Heart left ventricle (tissue), 16 donors: ENCODE measurements at regions of chr4 and their contacts with region 1.

Region 1: DNA sequence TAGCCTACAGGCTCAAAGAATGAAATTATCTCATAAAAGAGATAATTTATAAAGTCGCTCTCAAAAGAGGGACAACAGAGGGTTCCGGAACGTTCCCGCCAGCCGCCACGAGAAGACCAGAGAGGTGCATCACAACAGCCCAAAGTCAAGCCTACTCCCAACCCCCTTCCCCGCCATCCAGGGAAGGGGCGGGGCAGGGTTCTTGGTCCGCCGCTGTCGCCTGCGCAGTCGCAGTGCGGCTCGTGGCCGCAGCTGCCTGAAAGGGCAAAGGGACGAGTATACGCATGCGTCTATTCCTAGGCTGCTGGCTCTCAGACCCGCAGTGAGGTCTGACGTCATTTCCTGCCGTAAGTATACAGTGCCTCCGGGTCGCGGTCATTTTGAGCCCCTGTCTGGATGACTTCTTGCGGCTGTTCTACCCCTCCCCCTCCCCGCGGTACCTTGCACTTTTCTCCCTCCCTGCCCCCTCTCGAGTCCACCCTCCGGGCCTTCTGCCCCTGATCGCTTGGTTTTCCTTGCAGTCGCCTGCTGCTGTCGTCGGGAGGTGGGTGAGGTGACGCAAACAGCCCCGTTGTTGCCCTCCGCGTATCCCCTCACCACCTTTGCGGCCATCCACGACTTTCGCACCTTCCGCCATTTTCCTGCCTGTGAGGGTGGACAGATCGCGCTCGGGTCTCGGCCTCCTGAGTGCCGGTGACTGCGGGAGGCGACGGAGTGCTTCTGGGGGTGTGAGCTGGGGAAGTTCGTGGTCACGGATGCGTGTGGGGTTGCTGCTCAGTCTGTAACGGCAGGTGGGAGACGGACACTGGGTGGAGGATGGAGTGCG is at the start of gene OCIAD1:
- DNase-seq: peak; percentile 96 to 99 (median 98)
- ATAC-seq: peak; percentile 100
- H3K4me3 ChIP-seq: peak within 1 kb of the TSS; percentile 68 to 96 (median 80)
- H3K27ac ChIP-seq: peak within 1 kb of the TSS; percentile 88 to 97 (median 95)
- H3K4me1 ChIP-seq: peaks cover 0 to 26% (median 16%) of the 10 kb centered on the region in 12 donors
- H3K27me3 ChIP-seq: no peaks in the 10 kb centered on the region
- CTCF ChIP-seq: no peak
- POLR2A ChIP-seq: peak in 1 of 2 donors; percentile 65
- total RNA-seq, gene OCIAD1: 102 to 175 (median 137) TPM

Region 2: DNA sequence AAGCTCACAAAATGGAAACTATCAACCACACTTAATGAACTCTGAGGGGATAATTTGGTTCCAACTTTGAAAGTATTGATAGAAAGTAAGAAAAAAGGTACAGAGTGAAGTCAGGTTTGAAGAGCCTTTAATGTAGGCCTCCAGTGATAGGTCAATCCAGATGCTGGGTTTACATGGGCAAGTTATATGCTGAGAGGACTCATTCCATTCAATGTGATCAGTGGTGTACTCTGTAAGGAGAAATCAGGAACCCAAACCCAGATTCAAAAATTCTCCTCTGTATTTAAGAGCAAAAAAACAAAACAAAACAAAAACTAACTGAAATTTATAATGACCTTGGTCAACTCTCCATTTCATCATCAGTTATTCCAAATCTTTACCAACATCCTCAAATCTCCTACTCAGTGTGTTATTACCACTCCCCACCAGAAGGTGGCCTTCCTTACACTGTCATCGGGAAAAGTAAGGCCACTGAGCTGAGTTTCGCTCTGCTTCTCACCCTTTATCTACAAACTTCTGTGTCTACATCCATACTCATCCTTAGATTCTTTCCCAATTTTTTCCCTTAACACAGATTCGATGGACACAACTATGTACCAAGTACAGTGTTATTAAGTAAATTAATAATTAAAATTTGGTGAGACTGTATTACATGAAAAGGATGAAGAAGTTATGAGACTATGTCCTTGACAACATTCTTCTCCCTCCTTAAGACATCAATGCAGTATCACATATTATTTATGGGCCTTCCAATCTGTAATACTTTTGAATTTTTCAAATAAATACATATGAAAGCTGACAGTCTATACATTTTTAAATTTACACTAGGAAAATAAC is 252.6 kb before region 1 on chr4:
- intact Hi-C with region 1: loop called in 3 of 10 experiments (anchors 10 kb)
- DNase-seq: peak in 4 of 5 donors; percentile 33 to 60 (median 50)
- ATAC-seq: peak; percentile 61 to 93 (median 88)
- H3K4me3 ChIP-seq: no peak overlapping the region
- H3K27ac ChIP-seq: peak overlapping the region in 1 of 12 donors; percentile 16
- H3K4me1 ChIP-seq: no peaks in the 10 kb centered on the region
- H3K27me3 ChIP-seq: no peaks in the 10 kb centered on the region
- CTCF ChIP-seq: peak; percentile 80 to 94 (median 90)
- POLR2A ChIP-seq: no peak

Region 3: DNA sequence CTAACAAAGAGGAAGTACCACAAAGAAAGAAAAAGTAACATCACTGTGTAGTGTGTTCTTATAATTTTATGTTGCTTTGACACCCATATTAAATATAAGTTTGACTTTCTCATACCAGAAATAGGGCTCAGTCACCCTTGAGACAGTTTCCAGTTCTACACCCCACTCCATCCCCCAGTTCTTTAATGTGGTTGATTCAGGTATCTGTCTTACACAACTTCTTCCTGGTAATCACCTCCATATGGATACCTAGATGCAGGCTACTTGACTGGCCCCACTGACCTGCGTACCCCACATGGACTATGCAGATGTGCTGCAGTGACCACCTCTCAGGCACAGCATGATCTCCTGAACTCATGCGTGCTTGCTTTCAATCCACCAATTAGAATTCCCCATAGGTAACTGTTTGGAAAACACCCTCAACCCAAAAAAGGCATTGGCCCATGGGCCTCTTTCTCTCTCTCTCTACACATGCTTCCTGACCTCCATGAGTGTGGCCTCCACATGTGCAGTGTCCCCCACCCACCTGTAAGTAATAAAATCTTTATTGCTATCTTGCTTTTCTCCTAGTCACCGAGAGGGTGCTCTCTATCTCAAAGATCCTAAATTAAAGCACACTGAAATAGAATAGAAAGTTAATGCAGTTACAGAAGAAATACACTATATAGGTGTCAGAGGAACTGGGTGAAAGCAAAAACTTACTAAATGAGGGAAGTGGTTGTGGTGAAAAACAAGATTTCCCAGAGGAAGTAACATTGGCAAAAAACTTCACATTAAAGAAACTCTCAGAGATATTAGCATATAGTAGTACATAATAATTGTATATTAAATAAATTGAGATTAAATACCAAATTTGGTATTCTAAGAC is 242.5 kb before region 1 on chr4:
- intact Hi-C with region 1: loop called in 2 of 10 experiments (anchors 5 to 10 kb)
- DNase-seq: no peak
- ATAC-seq: no peak
- H3K4me3 ChIP-seq: no peak overlapping the region
- H3K27ac ChIP-seq: no peak overlapping the region
- H3K4me1 ChIP-seq: peaks cover 0 to 23% (median 7%) of the 10 kb centered on the region in 12 donors
- H3K27me3 ChIP-seq: no peaks in the 10 kb centered on the region
- CTCF ChIP-seq: no peak
- POLR2A ChIP-seq: no peak

Region 4: GRCh38 chr4:48602222-48602621 is 228.7 kb before region 1 on chr4:
- intact Hi-C with region 1: loop called in 2 of 10 experiments (anchors 5 kb)
- DNase-seq: no peak
- ATAC-seq: no peak
- H3K4me3 ChIP-seq: no peak overlapping the region
- H3K27ac ChIP-seq: no peak overlapping the region
- H3K4me1 ChIP-seq: peaks cover 0 to 17% (median 0%) of the 10 kb centered on the region in 12 donors
- H3K27me3 ChIP-seq: no peaks in the 10 kb centered on the region
- CTCF ChIP-seq: no peak
- POLR2A ChIP-seq: no peak

Region 5: GRCh38 chr4:48642421-48643374 is 188.2 kb before region 1 on chr4:
- intact Hi-C with region 1: no loop called
- DNase-seq: no peak
- ATAC-seq: no peak
- H3K4me3 ChIP-seq: peak overlapping the region in 1 of 12 donors; percentile 4
- H3K27ac ChIP-seq: peak overlapping the region in 9 of 12 donors; percentile 8 to 56 (median 33)
- H3K4me1 ChIP-seq: peaks cover 9 to 43% (median 33%) of the 10 kb centered on the region in 12 donors
- H3K27me3 ChIP-seq: no peaks in the 10 kb centered on the region
- CTCF ChIP-seq: no peak
- POLR2A ChIP-seq: no peak

Region 6: GRCh38 chr4:48698029-48698971 is 132.6 kb before region 1 on chr4:
- intact Hi-C with region 1: loop called in 2 of 10 experiments (anchors 10 kb)
- DNase-seq: peak in 4 of 5 donors; percentile 50 to 69 (median 62)
- ATAC-seq: peak; percentile 74 to 91 (median 88)
- H3K4me3 ChIP-seq: no peak overlapping the region
- H3K27ac ChIP-seq: no peak overlapping the region
- H3K4me1 ChIP-seq: peaks cover 0 to 34% (median 17%) of the 10 kb centered on the region in 12 donors
- H3K27me3 ChIP-seq: no peaks in the 10 kb centered on the region
- CTCF ChIP-seq: no peak
- POLR2A ChIP-seq: no peak